Activated CD4-positive, alpha-beta memory T cell treated with anti-CD3 and anti-CD28 coated beads for 36 hours (primary cell): ENCODE measurements at regions of chr2 and their contacts with region 1.

Region 1: GRCh38 chr2:102615622-102616436 is 3.5 kb upstream of the SLC9A2 start:
- DNase-seq: peak; percentile 64
- H3K4me3 Mint-ChIP-seq: no peak overlapping the region
- H3K27ac Mint-ChIP-seq: no peak overlapping the region
- H3K4me1 Mint-ChIP-seq: peaks cover 13% of the 10 kb centered on the region
- H3K27me3 Mint-ChIP-seq: peaks cover 42% of the 10 kb centered on the region

Region 2: DNA sequence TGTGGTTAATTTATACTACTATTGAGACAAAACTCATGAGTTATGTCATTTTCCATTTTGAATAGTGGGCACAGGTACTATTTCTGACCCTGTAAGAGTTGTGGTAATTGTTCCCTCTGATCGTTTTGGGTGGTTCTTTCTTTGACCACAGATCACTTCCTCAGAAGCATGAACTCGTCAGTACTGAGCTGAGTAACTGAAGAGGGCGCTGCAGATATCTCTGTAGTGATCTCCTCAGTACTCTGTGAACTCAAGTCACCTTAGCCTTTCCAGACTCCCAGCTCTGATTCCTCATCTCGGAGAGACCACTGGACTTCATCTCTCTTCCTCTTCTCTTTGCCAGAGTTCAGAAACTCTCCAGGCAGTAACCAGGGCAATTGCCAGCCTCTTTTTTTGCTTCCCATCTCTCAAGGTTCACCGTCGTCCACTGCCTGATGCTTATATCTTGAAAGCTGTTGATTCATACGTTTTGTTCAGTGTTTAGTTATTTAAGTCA is 313.9 kb before region 1 on chr2:
- CTCF ChIA-PET with region 1: no interaction called
- POLR2A ChIA-PET with region 1: no interaction called
- intact Hi-C with region 1: no loop called
- DNase-seq: peak; percentile 65
- H3K4me3 Mint-ChIP-seq: peak overlapping the region; percentile 4
- H3K27ac Mint-ChIP-seq: peak overlapping the region; percentile 55
- H3K4me1 Mint-ChIP-seq: peaks cover 45% of the 10 kb centered on the region
- H3K27me3 Mint-ChIP-seq: peaks cover 4% of the 10 kb centered on the region

Region 3: GRCh38 chr2:102489646-102490045 is 126.2 kb before region 1 on chr2:
- CTCF ChIA-PET with region 1: interaction called, 13 read pairs
- POLR2A ChIA-PET with region 1: no interaction called
- intact Hi-C with region 1: no loop called
- DNase-seq: no peak
- H3K4me3 Mint-ChIP-seq: no peak overlapping the region
- H3K27ac Mint-ChIP-seq: no peak overlapping the region
- H3K4me1 Mint-ChIP-seq: peaks cover 9% of the 10 kb centered on the region
- H3K27me3 Mint-ChIP-seq: peaks cover 24% of the 10 kb centered on the region

Region 4: GRCh38 chr2:102520028-102520427 is 95.8 kb before region 1 on chr2:
- CTCF ChIA-PET with region 1: interaction called, 13 read pairs
- POLR2A ChIA-PET with region 1: no interaction called
- intact Hi-C with region 1: loop called (anchors 1 kb)
- DNase-seq: peak; percentile 28
- H3K4me3 Mint-ChIP-seq: no peak overlapping the region
- H3K27ac Mint-ChIP-seq: no peak overlapping the region
- H3K4me1 Mint-ChIP-seq: no peaks in the 10 kb centered on the region
- H3K27me3 Mint-ChIP-seq: no peaks in the 10 kb centered on the region

Region 5: GRCh38 chr2:102703748-102704147 is 87.9 kb after region 1 on chr2:
- CTCF ChIA-PET with region 1: interaction called, 5 read pairs
- POLR2A ChIA-PET with region 1: no interaction called
- intact Hi-C with region 1: loop called (anchors 2 kb)
- DNase-seq: peak; percentile 22
- H3K4me3 Mint-ChIP-seq: no peak overlapping the region
- H3K27ac Mint-ChIP-seq: no peak overlapping the region
- H3K4me1 Mint-ChIP-seq: no peaks in the 10 kb centered on the region
- H3K27me3 Mint-ChIP-seq: no peaks in the 10 kb centered on the region